Activated CD4-positive, alpha-beta T cell treated with anti-CD3 and anti-CD28 coated beads for 36 hours (primary cell): ENCODE measurements at regions of chr16 and their contacts with region 1.

Region 1: DNA sequence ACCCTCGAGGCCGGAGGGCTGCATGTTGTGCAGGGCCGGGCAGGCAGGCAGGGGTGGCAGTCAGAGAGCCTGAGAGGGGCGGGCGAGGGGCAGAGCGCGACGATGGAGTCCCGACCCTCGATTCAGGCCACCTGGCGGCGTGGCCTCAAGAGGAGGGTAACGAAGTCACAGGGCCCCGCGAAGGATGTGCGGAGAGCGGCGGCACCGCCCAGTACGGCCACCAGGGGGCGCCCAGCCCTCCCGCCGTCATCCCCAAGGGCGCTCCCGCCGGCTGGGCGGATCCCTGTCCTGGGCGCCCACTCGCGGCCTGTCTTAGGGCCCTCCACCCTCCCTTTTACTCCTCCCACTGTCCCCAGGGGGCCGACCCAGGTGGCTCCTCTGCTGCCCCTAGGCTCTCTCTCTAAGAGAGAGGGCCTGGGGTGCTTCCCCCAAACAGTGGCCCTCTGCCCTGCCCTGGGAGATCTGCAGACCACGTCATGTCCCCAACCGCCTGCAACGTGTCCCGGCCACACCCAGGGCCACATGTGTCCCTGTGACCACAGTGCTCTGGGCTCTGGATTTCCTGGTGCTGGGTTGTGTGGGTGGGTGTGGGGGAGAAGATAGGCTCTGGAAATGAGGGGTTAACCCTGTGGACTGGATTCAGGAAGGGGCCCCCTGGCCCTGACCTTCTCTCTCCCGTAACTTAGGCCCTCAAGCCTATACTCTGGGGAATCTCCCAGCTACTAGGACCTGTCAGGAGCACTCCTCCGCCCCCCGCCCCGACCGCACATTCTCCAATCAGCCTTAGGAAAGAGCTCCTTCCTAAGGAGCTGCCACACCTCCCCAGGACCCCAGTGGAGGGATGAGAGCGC is 5.9 kb downstream of the DPEP2 start:
- DNase-seq: peak; percentile 92
- ATAC-seq: peak; percentile 89
- H3K4me3 Mint-ChIP-seq: peak overlapping the region; percentile 69
- H3K27ac Mint-ChIP-seq: peak overlapping the region; percentile 96
- H3K4me1 Mint-ChIP-seq: peaks cover 38% of the 10 kb centered on the region
- H3K27me3 Mint-ChIP-seq: no peaks in the 10 kb centered on the region

Region 2: DNA sequence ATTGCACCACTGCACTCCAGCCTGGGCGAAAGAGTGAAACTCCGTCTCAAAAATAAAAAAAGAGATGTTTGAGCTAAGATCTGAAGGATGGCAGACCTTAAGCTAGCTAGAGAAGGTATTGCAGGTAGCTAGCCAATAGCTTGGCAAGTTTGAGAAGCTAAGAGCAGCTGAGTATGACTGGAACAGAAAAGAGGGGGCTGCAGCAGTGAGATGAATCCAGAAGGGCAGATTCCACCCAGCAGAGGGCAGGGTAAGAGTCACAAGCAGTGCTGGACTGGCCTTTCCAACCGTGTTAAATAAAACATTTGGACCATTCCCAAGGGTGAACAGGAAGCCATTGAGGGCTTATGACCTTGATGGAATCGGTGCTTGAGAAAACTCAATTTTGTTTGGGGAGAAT is 889.4 kb before region 1 on chr16:
- CTCF ChIA-PET with region 1: no interaction called
- POLR2A ChIA-PET with region 1: no interaction called
- intact Hi-C with region 1: no loop called
- DNase-seq: peak; percentile 16
- ATAC-seq: peak; percentile 42
- H3K4me3 Mint-ChIP-seq: no peak overlapping the region
- H3K27ac Mint-ChIP-seq: no peak overlapping the region
- H3K4me1 Mint-ChIP-seq: peaks cover 5% of the 10 kb centered on the region
- H3K27me3 Mint-ChIP-seq: no peaks in the 10 kb centered on the region

Region 3: GRCh38 chr16:67968400-67969253 is 24.8 kb before region 1 on chr16 and contains the start of gene SLC12A4:
- CTCF ChIA-PET with region 1: no interaction called
- POLR2A ChIA-PET with region 1: no interaction called
- intact Hi-C with region 1: loop called in 1 of 2 experiments (anchors 1 kb)
- DNase-seq: peak; percentile 94
- ATAC-seq: peak; percentile 90
- H3K4me3 Mint-ChIP-seq: peak within 1 kb of the TSS; percentile 84
- H3K27ac Mint-ChIP-seq: peak within 1 kb of the TSS; percentile 80
- H3K4me1 Mint-ChIP-seq: peaks cover 14% of the 10 kb centered on the region
- H3K27me3 Mint-ChIP-seq: no peaks in the 10 kb centered on the region
- total RNA-seq, gene SLC12A4: 21.8 to 25.8 TPM

Region 4: GRCh38 chr16:68005786-68006286 is 12.4 kb after region 1 on chr16:
- CTCF ChIA-PET with region 1: interaction called, 11 read pairs
- POLR2A ChIA-PET with region 1: interaction called, 7 read pairs
- intact Hi-C with region 1: no loop called
- DNase-seq: peak; percentile 47
- ATAC-seq: peak; percentile 83
- H3K4me3 Mint-ChIP-seq: peak overlapping the region; percentile 30
- H3K27ac Mint-ChIP-seq: peak overlapping the region; percentile 86
- H3K4me1 Mint-ChIP-seq: peaks cover 24% of the 10 kb centered on the region
- H3K27me3 Mint-ChIP-seq: no peaks in the 10 kb centered on the region

Region 5: DNA sequence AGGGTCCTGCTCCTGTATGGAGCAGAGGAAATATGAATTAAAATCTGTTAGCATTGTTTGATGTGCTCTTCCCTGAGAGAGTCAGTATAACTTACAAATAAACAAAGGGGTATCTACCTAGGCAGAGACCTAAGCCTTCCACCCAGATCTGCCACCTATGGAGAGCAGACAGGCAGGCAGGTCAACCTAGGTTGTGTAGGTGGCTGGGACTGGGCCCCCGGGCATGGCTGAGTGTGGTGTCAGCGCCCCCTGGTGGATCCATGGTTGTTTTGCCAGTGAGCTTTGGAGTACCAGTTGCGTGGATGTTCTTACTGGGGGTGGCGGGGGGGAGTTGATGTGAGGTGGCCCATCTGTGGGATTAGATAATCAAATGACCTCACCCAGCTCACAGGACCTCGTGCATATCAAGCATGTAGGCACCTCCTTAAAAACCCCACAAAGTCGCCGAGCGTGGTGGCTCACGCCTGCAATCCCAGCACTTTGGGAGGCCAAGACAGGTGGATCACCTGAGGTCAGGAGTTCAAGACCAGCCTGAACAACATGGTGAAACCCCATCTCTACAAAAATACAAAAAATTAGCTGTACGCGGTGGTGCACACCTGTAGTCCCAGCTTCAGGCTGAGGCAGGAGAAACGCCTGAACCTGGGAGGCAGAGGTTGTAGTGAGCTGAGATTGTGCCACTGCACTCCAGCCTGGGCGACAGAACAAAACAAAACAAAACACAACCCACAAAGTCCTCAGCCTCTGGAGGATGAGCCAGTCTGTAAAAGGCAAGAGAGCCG is 47.3 kb after region 1 on chr16:
- CTCF ChIA-PET with region 1: interaction called, 7 read pairs
- POLR2A ChIA-PET with region 1: no interaction called
- intact Hi-C with region 1: loop called (anchors 1 kb)
- DNase-seq: peak; percentile 94
- ATAC-seq: peak; percentile 98
- H3K4me3 Mint-ChIP-seq: no peak overlapping the region
- H3K27ac Mint-ChIP-seq: peak overlapping the region; percentile 31
- H3K4me1 Mint-ChIP-seq: peaks cover 7% of the 10 kb centered on the region
- H3K27me3 Mint-ChIP-seq: no peaks in the 10 kb centered on the region

Region 6: GRCh38 chr16:68229431-68230198 is 236.2 kb after region 1 on chr16:
- CTCF ChIA-PET with region 1: interaction called, 6 read pairs
- POLR2A ChIA-PET with region 1: no interaction called
- intact Hi-C with region 1: loop called (anchors 1 kb)
- DNase-seq: peak; percentile 60
- ATAC-seq: no peak
- H3K4me3 Mint-ChIP-seq: no peak overlapping the region
- H3K27ac Mint-ChIP-seq: peak overlapping the region; percentile 48
- H3K4me1 Mint-ChIP-seq: peaks cover 48% of the 10 kb centered on the region
- H3K27me3 Mint-ChIP-seq: no peaks in the 10 kb centered on the region

Region 7: GRCh38 chr16:68332411-68333121 is 339.2 kb after region 1 on chr16:
- CTCF ChIA-PET with region 1: no interaction called
- POLR2A ChIA-PET with region 1: no interaction called
- intact Hi-C with region 1: no loop called
- DNase-seq: no peak
- ATAC-seq: peak; percentile 34
- H3K4me3 Mint-ChIP-seq: no peak overlapping the region
- H3K27ac Mint-ChIP-seq: peak overlapping the region; percentile 67
- H3K4me1 Mint-ChIP-seq: peaks cover 18% of the 10 kb centered on the region
- H3K27me3 Mint-ChIP-seq: no peaks in the 10 kb centered on the region